Prostate gland (tissue), 2 donors: ENCODE measurements at regions of chr1 and their contacts with region 1.

Region 1: GRCh38 chr1:226656601-226657277 is 82.3 kb downstream of the ITPKB start:
- DNase-seq: peak; percentile 50
- H3K4me3 ChIP-seq: no peak overlapping the region
- H3K27ac ChIP-seq: peak overlapping the region; percentile 62 to 74
- H3K4me1 ChIP-seq: peaks cover 31% of the 10 kb centered on the region
- H3K27me3 ChIP-seq: no peaks in the 10 kb centered on the region
- CTCF ChIP-seq: no peak
- POLR2A ChIP-seq: no peak

Region 2: GRCh38 chr1:226708342-226708780 is 51.6 kb after region 1 on chr1:
- intact Hi-C with region 1: loop called (anchors 2 kb)
- DNase-seq: no peak
- H3K4me3 ChIP-seq: no peak overlapping the region
- H3K27ac ChIP-seq: peak overlapping the region; percentile 56 to 58
- H3K4me1 ChIP-seq: peaks cover 29% of the 10 kb centered on the region
- H3K27me3 ChIP-seq: no peaks in the 10 kb centered on the region
- CTCF ChIP-seq: no peak
- POLR2A ChIP-seq: no peak